Calu3 (cell line): ENCODE measurements at regions of chr22 and their contacts with region 1.

Region 1: GRCh38 chr22:49951000-49951677 is 9.4 kb upstream of the PIM3 start:
- DNase-seq: peak; percentile 98
- H3K4me3 Mint-ChIP-seq: peak overlapping the region; percentile 58
- H3K27ac Mint-ChIP-seq: peak overlapping the region; percentile 93
- H3K4me1 Mint-ChIP-seq: peaks cover 9% of the 10 kb centered on the region
- H3K27me3 Mint-ChIP-seq: no peaks in the 10 kb centered on the region
- CTCF ChIP-seq: no peak

Region 2: GRCh38 chr22:49936018-49936952 is 14.9 kb before region 1 on chr22:
- CTCF ChIA-PET with region 1: interaction called, 30 read pairs
- intact Hi-C with region 1: no loop called
- DNase-seq: peak; percentile 91
- H3K4me3 Mint-ChIP-seq: peak overlapping the region; percentile 43
- H3K27ac Mint-ChIP-seq: peak overlapping the region; percentile 72
- H3K4me1 Mint-ChIP-seq: peaks cover 18% of the 10 kb centered on the region
- H3K27me3 Mint-ChIP-seq: no peaks in the 10 kb centered on the region
- CTCF ChIP-seq: no peak

Region 3: GRCh38 chr22:49962012-49962750 is 11.0 kb after region 1 on chr22:
- CTCF ChIA-PET with region 1: interaction called, 4 read pairs
- intact Hi-C with region 1: loop called (anchors 2 kb)
- DNase-seq: peak; percentile 87
- H3K4me3 Mint-ChIP-seq: peak overlapping the region; percentile 93
- H3K27ac Mint-ChIP-seq: peak overlapping the region; percentile 90
- H3K4me1 Mint-ChIP-seq: peaks cover 36% of the 10 kb centered on the region
- H3K27me3 Mint-ChIP-seq: no peaks in the 10 kb centered on the region
- CTCF ChIP-seq: no peak

Region 4: GRCh38 chr22:49986325-49986724 is 35.2 kb after region 1 on chr22:
- CTCF ChIA-PET with region 1: no interaction called
- intact Hi-C with region 1: no loop called
- DNase-seq: no peak
- H3K4me3 Mint-ChIP-seq: no peak overlapping the region
- H3K27ac Mint-ChIP-seq: no peak overlapping the region
- H3K4me1 Mint-ChIP-seq: no peaks in the 10 kb centered on the region
- H3K27me3 Mint-ChIP-seq: peaks cover 28% of the 10 kb centered on the region
- CTCF ChIP-seq: no peak

Region 5: DNA sequence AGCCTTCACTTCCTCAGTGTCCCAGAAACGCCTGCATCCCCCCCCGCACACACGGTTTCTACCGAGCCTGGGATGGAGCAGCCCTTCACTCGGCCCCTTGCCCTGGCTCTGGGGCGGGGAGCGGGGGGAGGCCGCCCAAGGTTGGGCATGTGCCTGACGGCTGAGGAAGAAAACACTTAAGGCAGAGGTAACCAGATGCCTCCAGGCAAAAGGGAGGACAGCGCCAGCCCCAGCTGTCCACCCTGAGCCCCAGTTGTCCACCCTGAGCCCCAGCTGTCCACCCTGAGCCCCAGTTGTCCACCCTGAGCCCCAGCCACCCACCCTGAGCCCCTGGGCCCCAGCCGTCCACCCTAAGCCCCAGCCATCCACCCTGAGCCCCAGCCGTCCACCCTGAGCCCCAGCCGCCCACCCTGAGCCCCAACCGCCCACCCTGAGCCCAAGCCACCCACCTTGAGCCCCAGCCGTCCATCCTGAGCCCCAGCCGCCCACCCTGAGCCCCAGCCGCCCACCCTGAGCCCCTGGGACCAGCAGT is 110.8 kb after region 1 on chr22:
- CTCF ChIA-PET with region 1: no interaction called
- intact Hi-C with region 1: no loop called
- DNase-seq: no peak
- H3K4me3 Mint-ChIP-seq: no peak overlapping the region
- H3K27ac Mint-ChIP-seq: no peak overlapping the region
- H3K4me1 Mint-ChIP-seq: peaks cover 14% of the 10 kb centered on the region
- H3K27me3 Mint-ChIP-seq: peaks cover 72% of the 10 kb centered on the region
- CTCF ChIP-seq: no peak

Region 6: DNA sequence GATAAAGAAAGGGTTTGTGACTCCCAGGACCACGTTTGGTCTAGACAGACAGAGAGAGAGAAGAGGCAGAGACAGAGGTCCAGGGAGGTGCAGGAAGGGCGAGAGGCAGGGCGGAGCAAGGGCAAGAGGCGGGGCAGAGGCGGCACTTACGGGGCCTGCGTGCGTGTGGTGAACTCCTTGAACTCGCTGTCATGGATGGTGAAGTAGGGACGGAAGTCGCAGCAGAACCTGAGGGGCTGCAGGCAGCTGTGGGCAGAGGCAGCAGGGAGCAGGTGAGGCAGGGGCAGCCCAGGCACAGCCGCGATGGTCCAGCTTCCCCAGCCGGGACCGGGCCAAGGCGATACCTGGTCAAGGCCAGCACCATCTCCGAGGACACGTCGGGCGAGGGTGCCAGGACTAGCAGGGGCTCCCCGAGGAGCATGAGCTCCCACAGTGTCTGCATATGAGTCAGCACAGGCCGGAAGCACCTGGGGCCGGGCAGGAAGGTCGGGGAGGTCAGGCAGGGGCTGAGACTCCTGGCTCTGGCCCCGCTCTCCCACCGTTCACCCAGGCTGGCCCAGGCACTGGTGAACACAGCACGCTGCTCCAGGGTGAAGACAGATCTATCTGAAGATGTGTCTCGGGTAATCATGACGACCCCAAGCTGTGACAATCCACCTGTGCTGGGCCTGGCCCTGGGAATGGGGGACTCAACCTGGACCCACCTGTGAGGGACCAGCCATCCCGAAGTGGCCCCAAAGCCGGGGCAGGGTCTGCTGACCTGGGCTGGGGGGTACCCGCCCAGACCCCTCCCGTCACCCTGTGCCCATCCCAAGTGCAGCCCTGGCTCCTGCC is 363.5 kb after region 1 on chr22:
- CTCF ChIA-PET with region 1: no interaction called
- intact Hi-C with region 1: no loop called
- DNase-seq: no peak
- H3K4me3 Mint-ChIP-seq: no peak overlapping the region
- H3K27ac Mint-ChIP-seq: no peak overlapping the region
- H3K4me1 Mint-ChIP-seq: no peaks in the 10 kb centered on the region
- H3K27me3 Mint-ChIP-seq: no peaks in the 10 kb centered on the region
- CTCF ChIP-seq: no peak